Astrocyte of the cerebellum (primary cell): ENCODE measurements at regions of chr4 and their contacts with region 1.

Region 1: GRCh38 chr4:88697588-88698329 is at the start of gene NAP1L5:
- DNase-seq: peak; percentile 29
- H3K4me3 ChIP-seq: peak within 1 kb of the TSS; percentile 67
- CTCF ChIP-seq: no peak

Region 2: GRCh38 chr4:88613417-88613875 is 84.3 kb before region 1 on chr4:
- in situ Hi-C with region 1: loop called (anchors 5 kb)
- DNase-seq: no peak
- H3K4me3 ChIP-seq: no peak overlapping the region
- CTCF ChIP-seq: no peak

Region 3: GRCh38 chr4:88771883-88772450 is 74.2 kb after region 1 on chr4:
- in situ Hi-C with region 1: loop called (anchors 5 kb)
- DNase-seq: no peak
- H3K4me3 ChIP-seq: no peak overlapping the region
- CTCF ChIP-seq: no peak

Region 4: GRCh38 chr4:88928852-88929251 is 231.1 kb after region 1 on chr4:
- in situ Hi-C with region 1: no loop called
- DNase-seq: no peak
- H3K4me3 ChIP-seq: no peak overlapping the region
- CTCF ChIP-seq: no peak